Panc1 (cell line): ENCODE measurements at regions of chr6 and their contacts with region 1.

Region 1: DNA sequence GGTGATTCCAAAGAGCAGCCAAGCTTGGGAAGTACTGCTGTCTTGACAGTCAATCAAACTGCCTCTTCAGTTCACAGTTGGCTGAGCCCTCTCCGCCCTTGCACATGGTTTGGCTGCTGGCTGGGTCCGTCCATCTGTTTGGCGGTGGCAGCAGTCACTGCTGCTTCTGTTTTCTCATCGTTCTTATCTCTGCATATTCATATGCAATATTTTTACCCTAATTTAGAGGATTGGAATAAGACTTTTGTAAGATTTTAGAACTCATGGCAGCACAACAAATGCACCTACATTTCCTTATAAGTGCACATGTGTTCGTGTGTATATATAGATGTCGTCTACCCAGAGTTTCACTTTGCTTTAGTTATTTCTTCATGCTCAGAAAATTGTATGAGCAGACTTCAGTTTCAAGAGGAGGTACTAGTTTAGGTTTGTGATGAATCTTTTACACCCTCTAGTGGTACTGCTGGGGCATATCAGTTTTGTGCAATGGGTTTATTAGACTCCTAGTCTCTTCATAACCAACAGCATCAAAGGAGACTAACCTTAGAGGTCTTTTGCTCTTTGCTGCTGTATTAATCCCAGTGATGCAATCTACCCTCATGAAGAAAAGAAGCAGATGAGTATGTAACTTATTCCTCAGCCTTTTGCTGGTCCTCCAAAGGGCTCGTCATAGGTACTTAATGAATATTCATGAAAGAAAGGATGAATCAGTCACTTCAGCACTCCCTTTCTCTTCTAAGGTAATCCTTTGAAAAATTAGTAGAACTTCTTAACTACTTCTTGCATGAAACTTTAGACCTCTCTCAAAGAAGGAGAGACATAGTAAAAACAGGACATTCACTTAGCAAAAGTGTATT is 44.3 kb downstream of the KHDC1L start:
- DNase-seq: peak; percentile 63
- ATAC-seq: peak; percentile 94
- H3K4me3 ChIP-seq: no peak overlapping the region; a peak in 1 of 4 replicates
- H3K27ac ChIP-seq: no peak overlapping the region
- H3K4me1 ChIP-seq: peaks cover 4% of the 10 kb centered on the region; the same call in 1 of the 2 replicates
- H3K27me3 ChIP-seq: no peaks in the 10 kb centered on the region
- CTCF ChIP-seq: peak; percentile 86

Region 2: GRCh38 chr6:72616406-72617015 is 564.5 kb before region 1 on chr6:
- CTCF ChIA-PET with region 1: interaction called, 4 read pairs
- POLR2A ChIA-PET with region 1: no interaction called
- in situ Hi-C with region 1: no loop called
- intact Hi-C with region 1: loop called (anchors 2 kb)
- DNase-seq: no peak
- ATAC-seq: no peak
- H3K4me3 ChIP-seq: no peak overlapping the region
- H3K27ac ChIP-seq: no peak overlapping the region
- H3K4me1 ChIP-seq: peaks cover 9% of the 10 kb centered on the region
- H3K27me3 ChIP-seq: no peaks in the 10 kb centered on the region; the same call in 1 of the 2 replicates
- CTCF ChIP-seq: peak; percentile 76; the same call in 1 of the 2 replicates

Region 3: DNA sequence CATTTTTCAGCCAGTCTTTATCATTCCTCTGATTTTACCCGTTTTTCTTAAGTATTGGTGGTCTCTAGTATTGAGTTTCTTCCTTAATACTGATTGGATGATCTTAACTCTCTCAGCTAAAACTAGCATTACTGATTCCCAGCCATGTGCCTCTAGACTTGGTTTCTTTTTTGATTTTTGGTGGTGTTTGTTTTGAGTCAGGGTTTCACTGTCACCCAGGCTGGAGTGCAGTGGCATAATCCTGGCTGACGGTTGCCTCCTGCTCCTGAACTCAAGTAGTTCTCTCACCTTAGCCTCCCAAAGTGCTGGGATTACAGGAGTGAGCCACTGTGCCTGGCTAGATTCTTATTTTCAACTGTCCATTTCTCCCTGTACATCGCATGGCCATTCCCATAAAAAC is 148.2 kb after region 1 on chr6:
- CTCF ChIA-PET with region 1: no interaction called
- POLR2A ChIA-PET with region 1: no interaction called
- in situ Hi-C with region 1: no loop called
- intact Hi-C with region 1: loop called (anchors 10 kb)
- DNase-seq: no peak
- ATAC-seq: no peak
- H3K4me3 ChIP-seq: no peak overlapping the region
- H3K27ac ChIP-seq: no peak overlapping the region
- H3K4me1 ChIP-seq: no peaks in the 10 kb centered on the region
- H3K27me3 ChIP-seq: no peaks in the 10 kb centered on the region
- CTCF ChIP-seq: no peak